CD8-positive, alpha-beta T cell (primary cell): ENCODE measurements at regions of chr12 and their contacts with region 1.

Region 1: GRCh38 chr12:57462251-57462911 is 2.8 kb downstream of the GLI1 start:
- DNase-seq: peak; percentile 78 to 93 (median 89)
- ATAC-seq: peak; percentile 64
- H3K4me3 ChIP-seq: peak overlapping the region; percentile 52 to 55
- H3K4me3 Mint-ChIP-seq: peak overlapping the region; percentile 92
- H3K27ac ChIP-seq: no peak overlapping the region
- H3K27ac Mint-ChIP-seq: peak overlapping the region; percentile 81
- H3K4me1 ChIP-seq: peaks cover 20% of the 10 kb centered on the region
- H3K4me1 Mint-ChIP-seq: peaks cover 34% of the 10 kb centered on the region
- H3K27me3 ChIP-seq: peaks cover 0 to 4% of the 10 kb centered on the region in 2 experiments
- H3K27me3 Mint-ChIP-seq: peaks cover 3% of the 10 kb centered on the region
- CTCF ChIP-seq: peak; percentile 92

Region 2: DNA sequence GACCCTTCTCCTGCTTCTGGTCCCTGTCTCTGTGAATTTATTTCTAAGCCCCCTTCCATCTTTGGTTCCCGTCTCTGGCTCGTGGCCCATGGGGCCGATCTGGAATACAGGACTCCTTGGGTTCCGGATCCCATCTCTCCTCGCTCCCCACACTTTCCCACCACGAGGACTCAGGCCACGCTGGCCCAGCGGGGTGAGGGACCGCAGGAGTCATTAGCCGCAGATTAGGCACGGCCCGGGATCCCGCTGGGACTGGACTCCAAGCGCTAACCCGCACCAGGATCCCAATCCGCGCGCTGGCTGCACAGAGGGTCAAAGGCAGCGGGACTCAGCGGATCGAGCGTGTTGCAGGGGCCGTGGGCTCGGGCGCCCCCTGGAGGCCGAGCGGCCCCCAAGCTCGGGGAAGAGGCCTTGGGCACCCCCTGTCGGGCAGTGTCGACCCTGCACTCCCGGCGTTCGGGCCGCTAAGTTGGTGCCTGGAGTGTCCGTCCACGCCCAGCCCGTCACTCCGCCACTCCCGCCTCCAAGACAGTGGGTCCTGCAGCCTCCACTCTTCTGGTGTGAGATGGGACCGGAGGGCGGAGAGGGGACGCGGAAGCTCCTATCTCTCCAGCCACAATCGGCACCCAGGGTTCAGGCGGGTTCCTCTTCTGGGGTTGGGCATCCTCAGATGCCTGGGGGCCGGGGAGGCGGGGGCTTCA is 223.4 kb before region 1 on chr12:
- CTCF ChIA-PET with region 1: interaction called, 10 read pairs
- POLR2A ChIA-PET with region 1: no interaction called
- intact Hi-C with region 1: no loop called
- DNase-seq: peak; percentile 73 to 92 (median 86)
- ATAC-seq: peak; percentile 65
- H3K4me3 ChIP-seq: peak overlapping the region; percentile 64 to 78
- H3K4me3 Mint-ChIP-seq: peak overlapping the region; percentile 93
- H3K27ac ChIP-seq: no peak overlapping the region
- H3K27ac Mint-ChIP-seq: no peak overlapping the region
- H3K4me1 ChIP-seq: peaks cover 79% of the 10 kb centered on the region
- H3K4me1 Mint-ChIP-seq: peaks cover 64% of the 10 kb centered on the region
- H3K27me3 ChIP-seq: peaks cover 48 to 72% of the 10 kb centered on the region in 2 experiments
- H3K27me3 Mint-ChIP-seq: peaks cover 56% of the 10 kb centered on the region
- CTCF ChIP-seq: peak; percentile 100

Region 3: GRCh38 chr12:57377103-57377840 is 85.1 kb before region 1 on chr12:
- CTCF ChIA-PET with region 1: no interaction called
- POLR2A ChIA-PET with region 1: no interaction called
- intact Hi-C with region 1: no loop called
- DNase-seq: no peak
- ATAC-seq: no peak
- H3K4me3 ChIP-seq: no peak overlapping the region
- H3K4me3 Mint-ChIP-seq: no peak overlapping the region
- H3K27ac ChIP-seq: no peak overlapping the region
- H3K27ac Mint-ChIP-seq: no peak overlapping the region
- H3K4me1 ChIP-seq: no peaks in the 10 kb centered on the region
- H3K4me1 Mint-ChIP-seq: peaks cover 11% of the 10 kb centered on the region
- H3K27me3 ChIP-seq: no peaks in the 10 kb centered on the region
- H3K27me3 Mint-ChIP-seq: no peaks in the 10 kb centered on the region
- CTCF ChIP-seq: no peak

Region 4: DNA sequence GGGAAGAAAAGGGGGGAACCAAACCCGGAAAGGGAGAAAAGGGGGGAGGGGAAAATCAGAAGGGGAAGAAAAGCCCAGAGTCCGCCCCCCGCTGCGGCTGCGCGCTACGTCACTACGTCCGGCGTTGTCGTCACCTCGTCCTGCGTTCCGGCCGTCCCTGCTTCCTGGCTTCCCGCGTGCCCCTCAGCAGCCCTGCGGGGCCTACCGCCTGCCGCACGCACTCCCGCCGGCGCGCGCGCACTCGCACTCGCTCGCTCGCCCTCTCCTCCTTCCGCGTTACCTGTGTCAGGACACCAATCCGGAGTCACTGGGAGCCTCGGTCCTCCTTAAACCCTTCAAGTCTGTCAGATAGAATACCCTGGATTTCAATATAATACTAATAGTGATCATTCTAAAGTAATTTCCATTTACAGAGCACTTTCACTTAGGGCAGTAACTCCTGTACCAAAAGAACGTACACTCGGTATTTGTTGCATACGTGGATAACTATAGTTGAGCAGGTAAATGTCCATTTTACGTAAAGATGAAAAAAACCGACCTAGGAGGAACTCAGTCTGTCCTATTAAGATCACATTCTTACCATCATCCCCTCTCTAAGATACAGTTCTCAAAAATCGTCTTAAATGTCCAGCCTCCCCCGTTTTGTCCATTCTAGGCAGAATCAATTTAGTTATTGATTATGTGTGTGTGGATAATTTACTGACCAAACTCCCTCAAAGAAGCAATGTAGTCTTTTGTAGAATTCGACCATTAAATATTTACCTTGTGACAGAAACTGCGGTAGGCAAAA is 31.3 kb before region 1 on chr12 and contains the start of gene R3HDM2:
- CTCF ChIA-PET with region 1: interaction called, 10 read pairs
- POLR2A ChIA-PET with region 1: interaction called, 8 read pairs
- intact Hi-C with region 1: loop called (anchors 1 to 2 kb)
- DNase-seq: peak; percentile 91 to 98 (median 96)
- ATAC-seq: peak; percentile 91
- H3K4me3 ChIP-seq: peak within 1 kb of the TSS; percentile 51 to 59
- H3K4me3 Mint-ChIP-seq: peak within 1 kb of the TSS; percentile 98
- H3K27ac ChIP-seq: peak within 1 kb of the TSS; percentile 87 to 96
- H3K27ac Mint-ChIP-seq: peak within 1 kb of the TSS; percentile 100
- H3K4me1 ChIP-seq: peaks cover 26% of the 10 kb centered on the region
- H3K4me1 Mint-ChIP-seq: peaks cover 45% of the 10 kb centered on the region
- H3K27me3 ChIP-seq: no peaks in the 10 kb centered on the region
- H3K27me3 Mint-ChIP-seq: no peaks in the 10 kb centered on the region
- CTCF ChIP-seq: no peak
- total RNA-seq, gene R3HDM2: 93.2 to 103 TPM

Region 5: GRCh38 chr12:57520053-57520871 is 57.9 kb after region 1 on chr12 and contains the start of gene DDIT3:
- CTCF ChIA-PET with region 1: interaction called, 10 read pairs
- POLR2A ChIA-PET with region 1: interaction called, 4 read pairs
- intact Hi-C with region 1: loop called (anchors 1 kb)
- DNase-seq: peak; percentile 99 to 100 (median 100)
- ATAC-seq: peak; percentile 76
- H3K4me3 ChIP-seq: peak within 1 kb of the TSS; percentile 83 to 94
- H3K4me3 Mint-ChIP-seq: peak within 1 kb of the TSS; percentile 98
- H3K27ac ChIP-seq: peak within 1 kb of the TSS; percentile 97 to 100
- H3K27ac Mint-ChIP-seq: peak within 1 kb of the TSS; percentile 100
- H3K4me1 ChIP-seq: peaks cover 53% of the 10 kb centered on the region
- H3K4me1 Mint-ChIP-seq: peaks cover 54% of the 10 kb centered on the region
- H3K27me3 ChIP-seq: no peaks in the 10 kb centered on the region
- H3K27me3 Mint-ChIP-seq: no peaks in the 10 kb centered on the region
- CTCF ChIP-seq: no peak
- total RNA-seq, gene DDIT3: 137 to 143 TPM

Region 6: GRCh38 chr12:57621497-57622292 is 159.3 kb after region 1 on chr12:
- CTCF ChIA-PET with region 1: interaction called, 9 read pairs
- POLR2A ChIA-PET with region 1: no interaction called
- intact Hi-C with region 1: loop called in 1 of 2 experiments (anchors 1 kb)
- DNase-seq: peak in 8 of 9 experiments; percentile 41 to 80 (median 64)
- ATAC-seq: peak; percentile 66
- H3K4me3 ChIP-seq: peak overlapping the region; percentile 45 to 52
- H3K4me3 Mint-ChIP-seq: peak overlapping the region; percentile 82
- H3K27ac ChIP-seq: no peak overlapping the region
- H3K27ac Mint-ChIP-seq: no peak overlapping the region
- H3K4me1 ChIP-seq: peaks cover 30% of the 10 kb centered on the region
- H3K4me1 Mint-ChIP-seq: peaks cover 26% of the 10 kb centered on the region
- H3K27me3 ChIP-seq: peaks cover 71 to 75% of the 10 kb centered on the region in 2 experiments
- H3K27me3 Mint-ChIP-seq: peaks cover 93% of the 10 kb centered on the region
- CTCF ChIP-seq: peak; percentile 83

Region 7: DNA sequence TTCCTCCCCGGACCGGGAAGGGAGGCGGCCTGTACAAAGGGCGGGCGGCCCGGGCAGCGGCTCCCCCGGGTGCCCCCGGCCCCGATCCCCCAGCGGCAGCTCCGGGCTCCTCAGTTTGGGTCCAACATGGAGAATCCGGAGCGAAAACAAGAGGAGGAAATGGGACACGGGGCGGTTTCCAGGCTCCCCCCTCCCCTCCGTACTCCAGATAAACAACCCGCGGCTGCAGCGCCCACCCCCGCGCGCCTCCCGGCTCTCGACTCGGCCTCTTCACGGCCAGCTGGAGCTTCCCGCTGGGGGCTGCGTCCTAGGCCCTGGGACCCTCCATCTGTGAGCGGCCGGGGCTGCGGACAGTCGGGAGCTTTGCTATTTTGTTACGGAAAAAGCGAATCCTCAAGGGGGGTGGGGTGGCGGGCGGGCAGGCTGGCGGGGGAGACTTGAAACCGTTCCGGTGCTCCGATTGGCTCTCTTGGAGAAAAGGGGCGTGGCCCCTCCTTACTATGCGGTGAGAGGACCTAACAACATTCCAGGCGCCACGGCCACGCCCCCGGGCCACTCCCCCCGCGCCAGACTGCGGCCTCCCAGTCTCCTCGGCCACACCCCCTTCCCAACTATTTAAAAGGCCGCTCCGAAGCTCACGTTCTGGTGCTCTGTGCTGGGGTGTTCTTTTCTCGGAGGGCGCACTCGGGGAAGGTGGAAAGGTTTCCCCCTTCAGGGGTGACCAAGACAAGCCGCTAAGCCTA is 384.4 kb after region 1 on chr12 and contains the start of gene CTDSP2:
- CTCF ChIA-PET with region 1: no interaction called
- POLR2A ChIA-PET with region 1: no interaction called
- intact Hi-C with region 1: loop called in 1 of 2 experiments (anchors 10 kb)
- DNase-seq: peak; percentile 52 to 95 (median 88)
- ATAC-seq: peak; percentile 39
- H3K4me3 ChIP-seq: peak within 1 kb of the TSS; percentile 95 to 100
- H3K4me3 Mint-ChIP-seq: peak within 1 kb of the TSS; percentile 87
- H3K27ac ChIP-seq: peak within 1 kb of the TSS; percentile 81
- H3K27ac Mint-ChIP-seq: peak within 1 kb of the TSS; percentile 90
- H3K4me1 ChIP-seq: peaks cover 36% of the 10 kb centered on the region
- H3K4me1 Mint-ChIP-seq: peaks cover 45% of the 10 kb centered on the region
- H3K27me3 ChIP-seq: no peaks in the 10 kb centered on the region
- H3K27me3 Mint-ChIP-seq: peaks cover 4% of the 10 kb centered on the region
- CTCF ChIP-seq: no peak
- total RNA-seq, gene CTDSP2: 68.1 to 70.5 TPM

Region 8: DNA sequence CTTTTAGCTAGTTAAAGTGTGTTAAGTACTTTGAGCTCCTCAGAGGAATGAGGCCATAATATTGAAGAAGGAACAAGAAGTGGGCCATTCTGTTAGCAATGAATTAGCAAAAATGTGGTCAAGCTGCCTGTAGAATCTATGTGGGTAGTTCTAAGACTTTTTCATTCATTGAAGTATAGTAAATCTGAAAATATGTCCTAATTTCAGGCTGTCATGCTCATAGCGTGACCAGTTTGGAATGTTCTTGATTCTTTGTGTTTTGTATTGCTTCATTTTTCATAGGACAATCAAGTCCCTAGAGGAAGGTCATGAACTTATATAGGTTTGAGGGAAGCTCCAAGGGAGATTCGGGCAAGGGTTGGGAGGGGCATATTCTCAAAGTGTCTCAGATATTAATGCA is 490.4 kb after region 1 on chr12:
- CTCF ChIA-PET with region 1: no interaction called
- POLR2A ChIA-PET with region 1: no interaction called
- intact Hi-C with region 1: no loop called
- DNase-seq: no peak
- ATAC-seq: no peak
- H3K4me3 ChIP-seq: no peak overlapping the region
- H3K4me3 Mint-ChIP-seq: no peak overlapping the region
- H3K27ac ChIP-seq: no peak overlapping the region
- H3K27ac Mint-ChIP-seq: no peak overlapping the region
- H3K4me1 ChIP-seq: no peaks in the 10 kb centered on the region
- H3K4me1 Mint-ChIP-seq: no peaks in the 10 kb centered on the region
- H3K27me3 ChIP-seq: no peaks in the 10 kb centered on the region
- H3K27me3 Mint-ChIP-seq: no peaks in the 10 kb centered on the region
- CTCF ChIP-seq: no peak